ENCODE measurements at regions of chr4 and their contacts with region 1.

Region 1: DNA sequence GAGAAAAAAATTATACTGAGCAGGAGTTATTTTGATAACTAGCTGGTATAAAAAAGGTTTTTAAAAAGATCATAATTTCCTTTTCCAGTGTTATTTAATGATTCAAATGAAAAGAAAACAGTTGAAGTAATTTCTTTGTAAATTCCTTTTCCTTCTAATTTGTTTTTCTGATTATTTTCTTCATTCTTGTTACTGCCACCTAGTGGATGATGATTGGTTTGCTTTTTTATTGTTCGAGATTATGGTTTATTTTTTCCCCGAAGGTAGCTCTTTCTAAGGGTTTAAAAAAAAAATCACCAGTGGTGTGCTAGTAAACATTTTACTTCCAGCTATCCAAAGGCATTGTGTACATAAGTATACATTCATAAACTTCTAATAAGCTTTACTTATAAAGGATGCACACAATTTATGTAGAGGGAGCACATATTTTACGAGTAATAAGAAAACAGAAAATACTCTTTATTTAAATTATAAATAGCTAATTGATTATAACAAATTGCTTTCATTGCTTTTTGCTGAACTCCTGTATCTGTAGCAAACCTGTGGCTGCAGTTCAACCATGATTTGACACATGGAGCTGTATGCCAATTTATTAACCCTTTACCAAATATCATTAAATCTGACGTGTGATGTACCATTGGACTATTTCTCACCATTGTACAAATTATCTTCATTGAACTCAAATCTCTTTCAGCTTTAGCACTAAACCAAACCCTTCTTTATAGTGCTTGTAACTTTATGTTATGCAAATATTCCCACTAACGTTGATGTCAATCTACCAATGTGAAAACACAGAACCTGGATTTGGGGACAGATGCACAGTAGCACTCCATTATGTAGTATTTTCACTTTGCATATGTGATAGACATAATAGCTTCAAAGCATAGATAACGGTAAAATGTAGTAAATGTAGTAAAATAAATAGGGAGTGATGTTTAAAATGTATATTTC is 97.8 kb upstream of the ANK2 start:
- DNase-seq: no peak
- ATAC-seq: no peak
- H3K4me3 ChIP-seq: peak overlapping the region in 2 of 12 donors; percentile 6 to 13
- H3K27ac ChIP-seq: no peak overlapping the region
- H3K4me1 ChIP-seq: peaks cover 0 to 7% (median 0%) of the 10 kb centered on the region in 12 donors
- H3K27me3 ChIP-seq: no peaks in the 10 kb centered on the region
- CTCF ChIP-seq: peak; percentile 38 to 65 (median 60)
- POLR2A ChIP-seq: no peak

Region 2: GRCh38 chr4:113052379-113052951 is 100.8 kb after region 1 on chr4:
- intact Hi-C with region 1: no loop called
- DNase-seq: no peak
- ATAC-seq: peak in 1 of 4 donors; percentile 17
- H3K4me3 ChIP-seq: no peak overlapping the region
- H3K27ac ChIP-seq: no peak overlapping the region
- H3K4me1 ChIP-seq: peaks cover 0 to 30% (median 0%) of the 10 kb centered on the region in 12 donors
- H3K27me3 ChIP-seq: no peaks in the 10 kb centered on the region
- CTCF ChIP-seq: no peak
- POLR2A ChIP-seq: no peak

Region 3: GRCh38 chr4:113094802-113095201 is 143.2 kb after region 1 on chr4:
- intact Hi-C with region 1: loop called in 1 of 10 experiments (anchors 10 kb)
- DNase-seq: no peak
- ATAC-seq: no peak
- H3K4me3 ChIP-seq: no peak overlapping the region
- H3K27ac ChIP-seq: no peak overlapping the region
- H3K4me1 ChIP-seq: no peaks in the 10 kb centered on the region
- H3K27me3 ChIP-seq: no peaks in the 10 kb centered on the region
- CTCF ChIP-seq: peak; percentile 34 to 68 (median 55)
- POLR2A ChIP-seq: no peak

Measured in heart left ventricle (tissue), 16 donors.